Transverse colon (tissue), 4 donors: ENCODE measurements at regions of chr4 and their contacts with region 1.

Region 1: DNA sequence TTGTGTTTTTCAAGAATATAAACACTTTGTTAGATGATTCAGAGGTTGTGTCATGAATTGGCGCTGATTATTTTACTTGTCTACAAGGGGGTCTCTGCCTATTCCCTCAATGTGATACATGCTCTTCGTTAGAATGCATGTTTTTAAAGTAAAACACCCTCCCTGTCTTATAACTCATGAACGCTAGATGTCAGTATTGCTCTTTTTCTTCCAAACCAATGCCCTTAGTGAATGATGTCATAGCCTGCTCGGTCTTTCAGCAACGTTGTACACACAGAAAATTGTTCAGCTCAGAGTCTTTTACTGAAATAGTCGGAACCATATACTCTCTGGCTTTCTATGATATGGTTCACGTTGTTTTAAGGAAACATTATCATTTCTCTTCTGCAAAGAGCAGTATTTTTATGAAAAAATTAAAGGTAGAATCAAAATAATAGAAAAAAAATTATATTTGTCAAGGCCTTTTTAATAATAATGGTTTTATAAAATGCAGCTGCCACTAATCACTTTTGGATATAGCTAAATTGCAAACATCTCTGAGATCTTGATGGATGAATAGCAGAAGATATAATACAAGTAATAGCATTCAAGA is 292.9 kb downstream of the TLL1 start:
- DNase-seq: no peak
- H3K4me3 ChIP-seq: no peak overlapping the region
- H3K27ac ChIP-seq: no peak overlapping the region
- H3K4me1 ChIP-seq: no peaks in the 10 kb centered on the region
- H3K27me3 ChIP-seq: no peaks in the 10 kb centered on the region
- CTCF ChIP-seq: peak; percentile 55 to 70 (median 62)
- EP300 ChIP-seq: no peak
- POLR2A ChIP-seq: no peak

Region 2: GRCh38 chr4:165131247-165131832 is 1034.6 kb before region 1 on chr4:
- in situ Hi-C with region 1: no loop called
- intact Hi-C with region 1: no loop called
- DNase-seq: peak; percentile 67
- H3K4me3 ChIP-seq: no peak overlapping the region
- H3K27ac ChIP-seq: no peak overlapping the region
- H3K4me1 ChIP-seq: no peaks in the 10 kb centered on the region
- H3K27me3 ChIP-seq: peaks cover 3% of the 10 kb centered on the region
- CTCF ChIP-seq: peak; percentile 84 to 93 (median 88)
- EP300 ChIP-seq: no peak
- POLR2A ChIP-seq: no peak

Region 3: DNA sequence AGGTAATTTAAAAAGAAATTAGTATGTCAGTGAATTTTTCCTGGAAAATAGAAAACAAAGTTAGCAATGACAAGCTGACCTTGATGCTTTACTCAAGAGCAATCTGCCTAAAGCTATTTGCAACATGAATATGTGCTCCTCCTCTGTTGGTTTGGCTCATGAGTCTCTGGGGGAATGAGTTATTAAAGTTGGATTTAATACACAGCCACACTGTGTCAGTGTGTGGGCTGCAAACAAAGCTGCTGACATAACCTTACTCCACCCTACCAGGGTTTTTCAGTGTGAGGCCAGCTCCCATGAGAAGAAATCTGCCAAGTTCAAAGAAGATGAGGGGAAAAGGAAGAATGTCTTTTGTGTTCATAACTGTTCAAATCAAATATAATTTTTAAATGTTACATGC is 12.4 kb before region 1 on chr4:
- in situ Hi-C with region 1: no loop called
- intact Hi-C with region 1: no loop called
- DNase-seq: no peak
- H3K4me3 ChIP-seq: no peak overlapping the region
- H3K27ac ChIP-seq: no peak overlapping the region
- H3K4me1 ChIP-seq: no peaks in the 10 kb centered on the region
- H3K27me3 ChIP-seq: no peaks in the 10 kb centered on the region
- CTCF ChIP-seq: no peak
- EP300 ChIP-seq: no peak
- POLR2A ChIP-seq: no peak

Region 4: GRCh38 chr4:166282081-166282770 is 116.3 kb after region 1 on chr4:
- in situ Hi-C with region 1: no loop called
- intact Hi-C with region 1: no loop called
- DNase-seq: no peak
- H3K4me3 ChIP-seq: no peak overlapping the region
- H3K27ac ChIP-seq: no peak overlapping the region
- H3K4me1 ChIP-seq: no peaks in the 10 kb centered on the region
- H3K27me3 ChIP-seq: no peaks in the 10 kb centered on the region
- CTCF ChIP-seq: no peak
- EP300 ChIP-seq: no peak
- POLR2A ChIP-seq: no peak

Region 5: DNA sequence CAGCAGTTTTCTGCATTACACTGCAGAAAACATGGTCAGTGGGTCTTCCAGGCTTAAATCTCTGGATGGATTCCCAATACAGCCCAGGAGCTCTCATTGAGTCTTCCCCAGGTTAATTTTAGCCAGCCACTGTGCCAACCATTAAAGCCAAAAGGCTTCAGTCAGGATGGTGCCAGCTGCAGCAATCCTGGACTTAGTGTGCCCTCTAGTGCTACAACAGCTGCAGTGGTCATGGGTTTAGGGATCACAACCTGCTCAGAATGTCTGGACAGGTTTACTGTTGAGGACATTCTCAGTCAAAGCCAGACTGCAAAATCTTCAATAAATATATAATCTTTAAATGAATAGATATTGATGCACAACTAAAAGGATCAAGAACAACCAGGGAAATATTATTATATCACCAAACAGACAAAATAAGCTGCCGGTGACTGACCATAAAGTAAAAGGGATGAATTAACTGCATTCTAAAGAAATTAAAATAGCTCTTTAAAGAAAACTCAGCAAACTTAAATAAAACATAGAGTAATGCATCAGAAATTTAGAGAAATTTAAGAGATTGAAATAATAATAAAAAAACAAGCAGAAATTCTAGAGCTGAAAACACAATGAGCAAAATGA is 428.5 kb after region 1 on chr4:
- in situ Hi-C with region 1: loop called in 2 of 4 experiments (anchors 25 kb)
- intact Hi-C with region 1: no loop called
- DNase-seq: peak; percentile 13
- H3K4me3 ChIP-seq: no peak overlapping the region
- H3K27ac ChIP-seq: no peak overlapping the region
- H3K4me1 ChIP-seq: no peaks in the 10 kb centered on the region
- H3K27me3 ChIP-seq: no peaks in the 10 kb centered on the region
- CTCF ChIP-seq: peak in 4 of 5 experiments; percentile 38 to 49 (median 42)
- EP300 ChIP-seq: no peak
- POLR2A ChIP-seq: no peak

Region 6: GRCh38 chr4:167129146-167129545 is 963.2 kb after region 1 on chr4:
- in situ Hi-C with region 1: no loop called
- intact Hi-C with region 1: no loop called
- DNase-seq: no peak
- H3K4me3 ChIP-seq: no peak overlapping the region
- H3K27ac ChIP-seq: no peak overlapping the region
- H3K4me1 ChIP-seq: no peaks in the 10 kb centered on the region
- H3K27me3 ChIP-seq: no peaks in the 10 kb centered on the region
- CTCF ChIP-seq: no peak
- EP300 ChIP-seq: no peak
- POLR2A ChIP-seq: no peak